Activated CD4-positive, alpha-beta memory T cell treated with anti-CD3 and anti-CD28 coated beads for 36 hours (primary cell): ENCODE measurements at regions of chr7 and their contacts with region 1.

Region 1: GRCh38 chr7:43834463-43835251 is 34.7 kb downstream of the MRPS24 start:
- DNase-seq: peak; percentile 64
- H3K4me3 Mint-ChIP-seq: peak overlapping the region; percentile 77
- H3K27ac Mint-ChIP-seq: peak overlapping the region; percentile 65
- H3K4me1 Mint-ChIP-seq: peaks cover 31% of the 10 kb centered on the region
- H3K27me3 Mint-ChIP-seq: no peaks in the 10 kb centered on the region

Region 2: GRCh38 chr7:43220250-43220649 is 614.4 kb before region 1 on chr7:
- CTCF ChIA-PET with region 1: no interaction called
- POLR2A ChIA-PET with region 1: no interaction called
- intact Hi-C with region 1: no loop called
- DNase-seq: no peak
- H3K4me3 Mint-ChIP-seq: no peak overlapping the region
- H3K27ac Mint-ChIP-seq: no peak overlapping the region
- H3K4me1 Mint-ChIP-seq: no peaks in the 10 kb centered on the region
- H3K27me3 Mint-ChIP-seq: peaks cover 10% of the 10 kb centered on the region

Region 3: GRCh38 chr7:43232366-43232765 is 602.3 kb before region 1 on chr7:
- CTCF ChIA-PET with region 1: no interaction called
- POLR2A ChIA-PET with region 1: no interaction called
- intact Hi-C with region 1: no loop called
- DNase-seq: no peak
- H3K4me3 Mint-ChIP-seq: no peak overlapping the region
- H3K27ac Mint-ChIP-seq: no peak overlapping the region
- H3K4me1 Mint-ChIP-seq: no peaks in the 10 kb centered on the region
- H3K27me3 Mint-ChIP-seq: peaks cover 4% of the 10 kb centered on the region

Region 4: GRCh38 chr7:43572516-43573049 is 262.1 kb before region 1 on chr7:
- CTCF ChIA-PET with region 1: interaction called, 12 read pairs
- POLR2A ChIA-PET with region 1: no interaction called
- intact Hi-C with region 1: no loop called
- DNase-seq: peak; percentile 67
- H3K4me3 Mint-ChIP-seq: no peak overlapping the region
- H3K27ac Mint-ChIP-seq: peak overlapping the region; percentile 44
- H3K4me1 Mint-ChIP-seq: peaks cover 26% of the 10 kb centered on the region
- H3K27me3 Mint-ChIP-seq: no peaks in the 10 kb centered on the region

Region 5: DNA sequence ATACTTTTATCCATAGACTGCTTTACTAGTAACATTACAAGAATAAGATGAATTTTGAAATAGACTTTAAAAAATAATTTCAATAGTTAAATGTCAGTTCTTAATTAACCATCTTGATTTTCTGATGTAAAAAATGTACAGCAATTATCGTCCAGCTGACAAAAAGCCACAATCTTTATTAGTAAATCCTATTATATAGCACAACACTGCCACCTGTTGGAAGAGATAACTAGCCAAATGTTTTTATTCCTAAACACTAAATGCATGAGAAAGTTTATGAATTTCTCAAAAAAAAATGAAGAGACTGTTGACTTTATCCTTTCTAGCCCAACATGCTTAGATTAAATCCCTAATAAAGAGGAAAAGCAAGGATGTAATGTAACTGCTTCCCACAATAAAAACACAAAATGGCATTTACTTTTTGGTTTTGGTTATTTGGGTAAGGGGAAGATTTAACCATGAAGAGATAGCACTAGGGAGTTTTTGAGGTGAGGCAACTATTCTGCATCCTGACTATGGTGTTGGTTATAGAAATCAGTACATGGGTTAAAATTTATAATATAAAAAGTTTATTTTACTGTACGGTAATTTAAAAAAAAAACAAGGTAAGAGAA is 113.4 kb before region 1 on chr7:
- CTCF ChIA-PET with region 1: interaction called, 17 read pairs
- POLR2A ChIA-PET with region 1: no interaction called
- intact Hi-C with region 1: no loop called
- DNase-seq: no peak
- H3K4me3 Mint-ChIP-seq: no peak overlapping the region
- H3K27ac Mint-ChIP-seq: no peak overlapping the region
- H3K4me1 Mint-ChIP-seq: peaks cover 40% of the 10 kb centered on the region
- H3K27me3 Mint-ChIP-seq: no peaks in the 10 kb centered on the region

Region 6: DNA sequence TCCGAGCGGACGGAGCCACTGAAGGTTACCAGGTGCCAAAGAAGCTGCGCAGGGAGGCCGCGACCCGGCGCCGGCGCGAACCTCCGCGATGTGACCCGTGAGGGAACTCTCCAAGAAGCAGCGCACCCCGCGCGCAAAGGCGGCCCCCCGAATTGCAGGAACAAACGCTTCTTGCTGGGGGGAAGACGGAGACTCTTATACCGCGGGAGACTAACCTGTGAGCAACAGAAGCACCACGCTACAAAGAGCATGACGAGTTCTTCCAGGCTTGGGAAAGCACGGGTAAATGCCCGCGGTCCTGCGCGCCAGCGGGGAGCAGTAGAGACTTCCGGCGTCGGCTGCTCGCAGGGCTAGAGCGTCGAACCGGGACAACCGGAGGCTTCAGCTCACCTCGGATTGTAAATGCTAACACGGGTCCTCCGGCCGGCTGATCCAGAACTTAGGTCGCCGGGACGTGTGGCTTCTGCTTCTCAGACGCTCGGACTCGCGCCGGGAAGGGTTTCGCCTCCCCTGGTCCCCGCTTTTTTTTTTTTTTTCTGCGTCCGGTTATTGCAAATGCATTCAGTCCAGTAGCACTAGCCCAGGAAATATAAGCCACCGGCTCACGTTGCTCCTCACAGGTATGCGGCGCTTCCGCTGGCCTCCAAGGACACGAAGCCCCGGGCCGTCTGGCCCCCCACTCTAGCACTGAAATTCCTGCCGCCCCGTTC is 105.3 kb before region 1 on chr7 and contains the start of gene COA1:
- CTCF ChIA-PET with region 1: interaction called, 36 read pairs
- POLR2A ChIA-PET with region 1: interaction called, 3 read pairs
- intact Hi-C with region 1: loop called (anchors 1 kb)
- DNase-seq: peak; percentile 89
- H3K4me3 Mint-ChIP-seq: peak within 1 kb of the TSS; percentile 94
- H3K27ac Mint-ChIP-seq: peak within 1 kb of the TSS; percentile 79
- H3K4me1 Mint-ChIP-seq: peaks cover 32% of the 10 kb centered on the region
- H3K27me3 Mint-ChIP-seq: no peaks in the 10 kb centered on the region
- total RNA-seq, gene COA1: 78.9 to 79.6 TPM

Region 7: GRCh38 chr7:43758029-43758821 is 76.4 kb before region 1 on chr7 and contains the start of gene BLVRA:
- CTCF ChIA-PET with region 1: interaction called, 9 read pairs
- POLR2A ChIA-PET with region 1: no interaction called
- intact Hi-C with region 1: loop called (anchors 2 kb)
- DNase-seq: peak; percentile 76
- H3K4me3 Mint-ChIP-seq: peak within 1 kb of the TSS; percentile 82
- H3K27ac Mint-ChIP-seq: no peak within 1 kb of the TSS
- H3K4me1 Mint-ChIP-seq: peaks cover 47% of the 10 kb centered on the region
- H3K27me3 Mint-ChIP-seq: peaks cover 13% of the 10 kb centered on the region
- total RNA-seq, gene BLVRA: 46.1 to 47.4 TPM

Region 8: GRCh38 chr7:43850348-43851116 is 15.9 kb after region 1 on chr7:
- CTCF ChIA-PET with region 1: interaction called, 20 read pairs
- POLR2A ChIA-PET with region 1: no interaction called
- intact Hi-C with region 1: no loop called
- DNase-seq: no peak
- H3K4me3 Mint-ChIP-seq: no peak overlapping the region
- H3K27ac Mint-ChIP-seq: no peak overlapping the region
- H3K4me1 Mint-ChIP-seq: peaks cover 2% of the 10 kb centered on the region
- H3K27me3 Mint-ChIP-seq: no peaks in the 10 kb centered on the region

Region 9: GRCh38 chr7:43891069-43891955 is 56.7 kb after region 1 on chr7:
- CTCF ChIA-PET with region 1: no interaction called
- POLR2A ChIA-PET with region 1: no interaction called
- intact Hi-C with region 1: no loop called
- DNase-seq: no peak
- H3K4me3 Mint-ChIP-seq: no peak overlapping the region
- H3K27ac Mint-ChIP-seq: no peak overlapping the region
- H3K4me1 Mint-ChIP-seq: peaks cover 44% of the 10 kb centered on the region
- H3K27me3 Mint-ChIP-seq: no peaks in the 10 kb centered on the region

Region 10: GRCh38 chr7:44275957-44276410 is 441.3 kb after region 1 on chr7:
- CTCF ChIA-PET with region 1: no interaction called
- POLR2A ChIA-PET with region 1: no interaction called
- intact Hi-C with region 1: no loop called
- DNase-seq: no peak
- H3K4me3 Mint-ChIP-seq: no peak overlapping the region
- H3K27ac Mint-ChIP-seq: no peak overlapping the region
- H3K4me1 Mint-ChIP-seq: peaks cover 3% of the 10 kb centered on the region
- H3K27me3 Mint-ChIP-seq: no peaks in the 10 kb centered on the region